Gastrocnemius medialis (tissue), 4 donors: ENCODE measurements at regions of chr1 and their contacts with region 1.

Region 1: GRCh38 chr1:84077476-84078107 is 66.5 kb upstream of the PRKACB start:
- DNase-seq: peak; percentile 12 to 42
- ATAC-seq: peak; percentile 92 to 94
- H3K4me3 ChIP-seq: peak overlapping the region; percentile 78 to 96 (median 80)
- H3K27ac ChIP-seq: peak overlapping the region; percentile 80 to 87 (median 86)
- H3K4me1 ChIP-seq: peaks cover 10 to 14% of the 10 kb centered on the region in 2 donors
- H3K27me3 ChIP-seq: no peaks in the 10 kb centered on the region
- CTCF ChIP-seq: no peak
- POLR2A ChIP-seq: peak in 1 of 2 donors; percentile 40

Region 2: DNA sequence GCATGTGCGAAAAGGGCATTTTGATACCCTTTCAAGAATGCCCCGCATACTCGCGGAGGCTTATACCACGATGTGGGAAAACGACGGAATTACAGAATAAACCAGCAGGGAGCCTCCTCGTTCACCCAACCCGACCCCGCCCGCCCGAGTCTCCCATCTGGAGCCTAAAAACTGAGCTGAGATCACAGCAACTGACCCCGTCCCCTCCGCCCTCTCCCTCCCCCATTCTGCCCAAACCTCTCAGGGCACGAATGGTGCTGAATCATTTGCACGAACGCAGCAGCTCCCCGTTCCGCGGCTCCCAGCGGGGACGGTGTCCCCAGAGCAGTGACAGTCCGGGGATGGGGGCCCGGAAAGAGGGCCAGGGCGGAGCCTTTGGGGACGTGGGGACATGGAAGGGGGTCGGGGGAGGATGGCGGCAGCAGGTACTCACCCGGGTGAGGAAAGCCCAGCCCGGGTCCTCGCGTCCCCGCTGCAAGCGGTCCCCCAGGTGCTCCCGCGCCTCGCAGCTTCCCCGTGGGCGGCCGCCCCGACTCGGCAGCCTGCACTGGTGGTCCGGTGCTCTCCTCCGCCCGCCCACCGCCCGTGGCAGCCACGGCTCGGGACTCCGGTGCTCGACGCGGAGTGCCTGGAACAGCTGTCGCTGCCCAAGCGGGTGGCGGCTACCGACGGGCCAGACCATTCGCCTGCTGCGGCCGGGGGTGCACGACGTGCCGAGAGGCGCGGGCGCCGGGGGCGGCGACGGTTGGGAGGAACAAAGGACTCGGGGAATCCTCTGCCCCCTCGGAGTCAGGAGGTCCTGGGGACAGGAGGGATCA is 78.9 kb before region 1 on chr1 and contains the start of gene TTLL7:
- in situ Hi-C with region 1: no loop called
- intact Hi-C with region 1: loop called (anchors 5 kb)
- DNase-seq: peak; percentile 51 to 79
- ATAC-seq: peak; percentile 92 to 93
- H3K4me3 ChIP-seq: peak within 1 kb of the TSS; percentile 65 to 93 (median 89)
- H3K27ac ChIP-seq: peak within 1 kb of the TSS; percentile 81 to 90 (median 86)
- H3K4me1 ChIP-seq: peaks cover 13 to 17% of the 10 kb centered on the region in 2 donors
- H3K27me3 ChIP-seq: no peaks in the 10 kb centered on the region
- CTCF ChIP-seq: no peak
- POLR2A ChIP-seq: peak; percentile 56 to 74
- total RNA-seq, gene TTLL7: 8.2 to 22.9 (median 12.3) TPM

Region 3: GRCh38 chr1:84347932-84348555 is 270.5 kb after region 1 on chr1:
- in situ Hi-C with region 1: no loop called
- intact Hi-C with region 1: loop called (anchors 1 kb)
- DNase-seq: no peak
- ATAC-seq: no peak
- H3K4me3 ChIP-seq: no peak overlapping the region
- H3K27ac ChIP-seq: peak overlapping the region in 3 of 4 donors; percentile 5 to 38 (median 35)
- H3K4me1 ChIP-seq: peaks cover 7 to 26% of the 10 kb centered on the region in 2 donors
- H3K27me3 ChIP-seq: no peaks in the 10 kb centered on the region
- CTCF ChIP-seq: no peak
- POLR2A ChIP-seq: no peak

Region 4: DNA sequence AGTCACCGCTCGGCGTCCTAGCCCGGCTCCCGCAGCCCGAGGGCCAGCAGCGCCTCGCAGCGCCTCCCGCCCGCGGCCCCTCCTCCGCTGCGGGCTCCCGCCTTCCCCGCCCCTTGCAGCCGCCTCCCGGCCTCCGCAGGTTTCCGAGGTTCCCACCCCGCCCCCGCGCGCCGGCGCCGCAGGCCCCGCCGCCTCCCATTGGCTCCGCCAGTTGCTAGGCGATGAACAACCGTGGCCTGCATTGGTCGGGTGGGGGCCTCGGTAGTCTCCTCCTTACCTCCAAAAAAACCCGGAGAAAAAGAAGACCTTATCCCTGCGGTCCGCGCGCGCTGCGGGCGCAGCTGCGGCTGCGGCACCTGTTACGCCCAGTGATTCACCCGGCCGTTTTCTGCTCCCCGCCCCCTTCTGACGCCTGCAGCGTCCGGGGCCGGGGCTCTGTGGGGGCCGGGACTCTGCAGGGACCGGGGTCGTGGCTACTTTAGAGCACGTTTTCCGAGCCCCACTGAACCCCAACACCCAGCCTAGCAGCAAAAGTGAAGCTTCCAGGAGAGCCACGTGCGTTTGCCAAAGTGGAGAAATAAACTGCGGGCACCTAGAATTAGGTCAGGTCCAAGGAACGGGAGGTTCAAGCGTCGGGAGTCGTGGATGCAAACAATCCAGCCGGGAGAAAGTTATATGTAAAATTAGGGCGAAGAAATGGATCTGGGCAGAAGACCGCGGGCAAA is 613.0 kb after region 1 on chr1 and contains the start of gene SSX2IP:
- in situ Hi-C with region 1: no loop called
- intact Hi-C with region 1: loop called (anchors 10 kb)
- DNase-seq: peak; percentile 97 to 99
- ATAC-seq: peak; percentile 97 to 98
- H3K4me3 ChIP-seq: peak within 1 kb of the TSS; percentile 87 to 96 (median 89)
- H3K27ac ChIP-seq: peak within 1 kb of the TSS; percentile 83 to 91 (median 86)
- H3K4me1 ChIP-seq: peaks cover 4 to 17% of the 10 kb centered on the region in 2 donors
- H3K27me3 ChIP-seq: no peaks in the 10 kb centered on the region
- CTCF ChIP-seq: no peak
- POLR2A ChIP-seq: peak; percentile 10 to 61
- total RNA-seq, gene SSX2IP: 3.5 to 7.0 (median 4.7) TPM